ENCODE measurements at regions of chr4 and their contacts with region 1.

Region 1: DNA sequence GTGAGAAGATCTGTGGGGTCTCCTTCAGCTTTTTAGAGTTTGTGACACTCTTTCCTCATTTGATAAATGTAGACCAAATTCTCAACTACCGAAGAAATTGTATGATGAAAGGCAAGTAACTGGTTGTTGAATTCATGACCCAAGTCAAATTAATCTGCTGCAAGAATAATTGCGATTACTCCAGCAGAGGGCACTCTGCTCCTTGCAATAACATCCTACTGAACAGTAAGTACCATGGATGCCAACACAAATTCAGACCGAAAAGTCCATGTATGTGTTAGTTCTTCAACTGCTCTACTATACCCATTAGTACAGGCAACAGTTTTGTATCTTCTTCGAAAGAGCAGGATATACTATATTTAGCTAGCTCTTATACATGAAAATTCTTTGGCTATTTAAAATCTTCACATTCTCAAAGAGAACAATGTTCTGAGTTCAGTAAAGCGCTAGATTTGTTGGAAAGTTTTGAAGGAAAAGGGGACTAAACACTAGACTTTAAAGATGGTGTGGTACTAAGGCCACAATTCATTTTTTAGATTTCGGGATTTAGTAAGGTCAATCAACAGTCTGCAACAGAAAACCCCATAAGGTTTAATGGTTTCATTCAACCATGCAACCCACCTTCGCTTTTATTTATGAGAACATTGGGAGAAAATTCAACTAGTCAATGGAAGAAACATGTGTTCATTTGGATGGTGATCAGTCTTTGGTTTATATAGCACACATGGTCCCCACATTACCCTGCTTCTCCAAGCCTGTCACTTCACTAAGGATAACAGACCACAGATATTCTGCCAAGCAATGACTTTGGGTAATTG is 105.4 kb upstream of the TBC1D9 start:
- DNase-seq: peak; percentile 38 to 55
- ATAC-seq: peak; percentile 83 to 91
- H3K4me3 ChIP-seq: no peak overlapping the region
- H3K27ac ChIP-seq: no peak overlapping the region
- H3K4me1 ChIP-seq: peaks cover under 1 to 4% of the 10 kb centered on the region in 2 donors
- H3K27me3 ChIP-seq: no peaks in the 10 kb centered on the region
- CTCF ChIP-seq: peak; percentile 68 to 81 (median 76)
- POLR2A ChIP-seq: no peak

Region 2: DNA sequence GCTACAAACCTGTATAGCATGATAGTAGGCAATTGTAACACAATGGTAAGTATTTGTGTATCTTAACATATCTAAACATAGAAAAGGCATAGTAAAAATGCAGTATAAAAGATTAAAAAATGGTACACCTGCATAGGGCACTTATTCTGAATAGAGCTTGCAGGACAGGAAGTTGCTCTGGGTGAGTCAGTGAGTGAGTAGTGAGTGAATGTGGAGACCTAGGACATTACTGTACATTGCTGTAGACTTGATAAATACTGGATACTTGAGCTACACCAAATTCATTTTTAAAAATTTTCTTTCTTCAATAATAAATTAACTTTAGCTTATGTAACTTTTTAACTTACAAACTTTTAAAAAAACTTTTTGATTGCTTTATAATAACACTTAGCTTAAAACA is 639.4 kb before region 1 on chr4:
- in situ Hi-C with region 1: no loop called
- intact Hi-C with region 1: no loop called
- DNase-seq: no peak
- ATAC-seq: no peak
- H3K4me3 ChIP-seq: no peak overlapping the region
- H3K27ac ChIP-seq: no peak overlapping the region
- H3K4me1 ChIP-seq: no peaks in the 10 kb centered on the region
- H3K27me3 ChIP-seq: no peaks in the 10 kb centered on the region
- CTCF ChIP-seq: no peak
- POLR2A ChIP-seq: no peak

Region 3: DNA sequence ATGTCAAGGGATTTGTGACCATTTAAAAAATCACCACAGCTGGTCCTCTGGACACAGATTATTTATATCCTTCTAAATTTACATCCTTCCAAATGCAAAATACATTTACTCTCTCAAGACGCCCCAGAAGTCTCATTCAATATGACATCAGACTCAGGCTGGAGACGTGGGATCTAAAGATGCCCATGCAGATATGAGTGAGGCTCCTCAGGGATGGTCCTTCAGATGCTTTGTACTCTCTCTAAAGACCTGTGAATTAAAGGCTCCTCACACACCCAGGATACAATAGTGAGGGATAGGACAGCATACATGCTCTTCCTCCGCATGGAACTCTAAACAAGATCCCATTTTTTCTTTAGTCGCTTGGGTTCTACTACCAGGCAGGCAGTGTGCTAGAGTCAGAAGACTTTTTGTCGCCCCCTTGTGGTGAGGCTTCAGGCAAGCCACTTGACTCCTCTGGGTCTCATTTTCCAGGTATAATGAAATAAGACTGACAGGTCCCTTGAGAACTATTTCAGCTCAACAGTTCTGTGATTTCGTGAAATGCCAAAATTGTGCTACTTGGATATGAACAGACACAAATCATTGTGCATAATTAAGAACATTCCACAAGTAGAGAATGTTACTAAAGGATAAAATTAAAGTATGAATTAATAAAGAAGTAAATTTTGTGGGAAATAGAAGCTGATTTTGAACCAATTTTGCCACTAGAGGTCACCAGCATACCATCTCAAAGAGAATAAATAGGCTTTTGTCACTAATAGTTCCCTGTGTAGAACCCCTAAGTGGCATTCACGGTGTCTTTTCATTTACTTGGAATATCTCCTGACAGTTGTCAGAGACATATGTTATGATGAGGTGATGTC is 501.8 kb before region 1 on chr4:
- in situ Hi-C with region 1: loop called in 2 of 4 experiments (anchors 10 to 25 kb)
- intact Hi-C with region 1: no loop called
- DNase-seq: peak; percentile 36 to 48
- ATAC-seq: peak; percentile 62 to 87
- H3K4me3 ChIP-seq: no peak overlapping the region
- H3K27ac ChIP-seq: no peak overlapping the region
- H3K4me1 ChIP-seq: no peaks in the 10 kb centered on the region
- H3K27me3 ChIP-seq: no peaks in the 10 kb centered on the region
- CTCF ChIP-seq: peak; percentile 48 to 86 (median 61)
- POLR2A ChIP-seq: no peak

Region 4: GRCh38 chr4:140641789-140642439 is 219.7 kb before region 1 on chr4:
- in situ Hi-C with region 1: no loop called
- intact Hi-C with region 1: no loop called
- DNase-seq: no peak
- ATAC-seq: no peak
- H3K4me3 ChIP-seq: no peak overlapping the region
- H3K27ac ChIP-seq: no peak overlapping the region
- H3K4me1 ChIP-seq: no peaks in the 10 kb centered on the region
- H3K27me3 ChIP-seq: no peaks in the 10 kb centered on the region
- CTCF ChIP-seq: no peak
- POLR2A ChIP-seq: no peak

Region 5: DNA sequence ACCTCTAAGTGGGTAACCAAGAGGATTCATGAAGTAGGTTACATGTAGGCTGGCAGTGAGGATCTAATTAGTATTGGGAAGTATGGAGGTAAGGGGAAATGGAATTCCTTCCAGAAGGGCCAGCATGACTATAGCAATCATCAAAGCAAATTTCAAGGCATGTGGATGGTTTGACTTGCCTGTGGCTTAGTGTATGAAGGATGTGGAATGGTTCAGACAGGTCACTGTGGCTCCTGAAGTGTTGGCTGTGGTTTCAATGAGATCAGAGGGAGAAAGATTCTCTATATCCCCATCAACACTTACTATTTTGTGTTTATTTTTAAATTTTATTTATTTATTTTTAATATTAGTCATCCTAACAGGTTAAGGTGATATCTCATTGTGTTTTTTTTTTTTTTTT is 16.2 kb after region 1 on chr4:
- in situ Hi-C with region 1: no loop called
- intact Hi-C with region 1: loop called (anchors 2 kb)
- DNase-seq: no peak
- ATAC-seq: no peak
- H3K4me3 ChIP-seq: no peak overlapping the region
- H3K27ac ChIP-seq: no peak overlapping the region
- H3K4me1 ChIP-seq: no peaks in the 10 kb centered on the region
- H3K27me3 ChIP-seq: no peaks in the 10 kb centered on the region
- CTCF ChIP-seq: no peak
- POLR2A ChIP-seq: no peak

Region 6: DNA sequence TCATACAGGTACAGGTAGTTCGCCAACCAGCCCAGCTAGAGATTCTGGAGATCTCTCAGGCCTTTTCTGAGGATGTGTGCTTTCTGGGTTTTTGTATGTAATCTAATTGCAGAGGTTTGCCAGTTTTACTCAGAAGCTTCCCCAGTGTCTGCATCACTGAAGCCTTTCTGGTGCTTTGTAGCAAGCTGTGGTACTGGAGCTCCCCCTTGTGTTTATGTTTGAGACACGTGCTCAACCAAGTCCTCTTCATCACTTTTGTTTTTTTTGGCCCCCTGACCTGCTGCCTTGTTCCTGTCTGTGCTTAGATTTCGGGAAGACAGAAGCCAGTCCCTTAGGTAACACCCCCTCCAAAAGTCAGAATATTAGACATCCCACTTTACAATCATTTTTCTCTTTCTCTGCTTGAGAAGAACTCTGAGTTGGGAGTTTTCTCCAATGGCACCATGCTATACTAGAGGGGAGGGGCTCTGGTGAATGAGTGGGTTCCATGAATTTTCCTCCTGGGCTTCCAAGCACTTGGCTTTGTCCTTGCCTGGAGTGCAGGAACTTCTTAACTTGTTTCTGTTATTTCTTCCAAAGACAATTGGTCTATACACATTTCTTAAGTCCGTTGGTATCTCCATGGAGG is 23.0 kb after region 1 on chr4:
- in situ Hi-C with region 1: no loop called
- intact Hi-C with region 1: loop called (anchors 1 kb)
- DNase-seq: peak in 1 of 2 donors; percentile 11
- ATAC-seq: peak; percentile 44 to 61
- H3K4me3 ChIP-seq: no peak overlapping the region
- H3K27ac ChIP-seq: no peak overlapping the region
- H3K4me1 ChIP-seq: peaks cover 23 to 24% of the 10 kb centered on the region in 2 donors
- H3K27me3 ChIP-seq: no peaks in the 10 kb centered on the region
- CTCF ChIP-seq: peak in 4 of 5 experiments; percentile 52 to 68 (median 57)
- POLR2A ChIP-seq: no peak

Region 7: GRCh38 chr4:141220655-141221605 is 359.4 kb after region 1 on chr4 and contains the start of gene ZNF330:
- in situ Hi-C with region 1: no loop called
- intact Hi-C with region 1: loop called (anchors 5 kb)
- DNase-seq: peak; percentile 78 to 88
- ATAC-seq: peak; percentile 94 to 95
- H3K4me3 ChIP-seq: peak within 1 kb of the TSS; percentile 98 to 100 (median 98)
- H3K27ac ChIP-seq: peak within 1 kb of the TSS; percentile 98 to 100 (median 100)
- H3K4me1 ChIP-seq: peaks cover 28 to 31% of the 10 kb centered on the region in 2 donors
- H3K27me3 ChIP-seq: no peaks in the 10 kb centered on the region
- CTCF ChIP-seq: peak in 2 of 5 experiments; percentile 4 to 28
- POLR2A ChIP-seq: peak; percentile 93 to 94
- total RNA-seq, gene ZNF330: 24.0 to 54.3 (median 36.1) TPM